ENCODE measurements at regions of chr17 and their contacts with region 1.

Region 1: GRCh38 chr17:27601069-27601975 is 29.7 kb upstream of the LGALS9 start:
- DNase-seq: peak; percentile 16
- H3K4me3 ChIP-seq: no peak overlapping the region
- H3K27me3 ChIP-seq: no peaks in the 10 kb centered on the region
- CTCF ChIP-seq: peak; percentile 91

Region 2: DNA sequence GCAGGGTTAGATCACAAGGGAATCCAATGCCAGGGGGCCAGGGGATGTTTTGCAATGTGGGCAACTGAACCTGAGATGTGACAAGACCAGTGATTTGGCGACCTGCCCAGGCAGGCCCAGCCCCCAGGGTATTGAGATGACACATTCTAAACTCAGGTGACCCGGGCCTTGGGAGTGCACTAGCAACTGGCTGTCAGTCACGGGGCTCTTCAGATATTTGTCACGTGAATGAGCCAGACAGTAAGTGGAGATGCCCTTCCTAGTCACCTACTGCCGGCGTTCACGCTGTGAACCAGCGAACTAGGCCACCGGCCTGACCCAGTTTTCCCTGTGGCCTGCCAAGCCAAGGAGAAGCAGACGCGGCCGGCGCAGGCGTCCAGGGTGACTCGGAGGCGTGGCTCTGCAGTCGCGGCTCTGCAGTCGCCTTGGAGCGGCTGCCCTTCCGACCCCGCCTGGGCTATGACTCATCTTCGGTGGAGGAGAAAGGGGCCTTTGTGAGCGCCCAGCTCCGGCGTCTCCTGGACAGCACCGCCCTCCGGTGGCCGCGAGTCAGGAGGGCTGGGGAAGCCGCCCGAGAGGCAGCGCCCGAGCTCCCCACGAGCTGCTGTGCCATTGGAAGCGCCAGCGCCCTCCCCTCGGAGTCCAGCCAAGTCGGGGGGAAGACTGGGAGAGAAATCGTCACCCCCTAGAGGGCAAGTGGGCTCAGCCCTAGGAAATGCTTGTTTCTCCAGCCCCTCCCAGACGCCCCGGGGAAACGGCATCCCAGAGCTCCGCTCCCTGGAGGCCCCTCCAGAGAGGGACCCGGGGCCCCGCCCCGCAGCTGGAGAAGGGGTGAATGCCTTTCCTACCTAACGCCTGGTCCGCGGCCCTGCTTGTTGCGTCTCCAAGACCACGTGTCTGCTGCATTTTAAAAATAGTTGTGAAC is 268.6 kb before region 1 on chr17:
- CTCF ChIA-PET with region 1: interaction called, 13 read pairs
- POLR2A ChIA-PET with region 1: interaction called, 14 read pairs
- DNase-seq: peak; percentile 86
- H3K4me3 ChIP-seq: peak overlapping the region; percentile 47
- H3K27me3 ChIP-seq: no peaks in the 10 kb centered on the region
- CTCF ChIP-seq: peak; percentile 88

Region 3: DNA sequence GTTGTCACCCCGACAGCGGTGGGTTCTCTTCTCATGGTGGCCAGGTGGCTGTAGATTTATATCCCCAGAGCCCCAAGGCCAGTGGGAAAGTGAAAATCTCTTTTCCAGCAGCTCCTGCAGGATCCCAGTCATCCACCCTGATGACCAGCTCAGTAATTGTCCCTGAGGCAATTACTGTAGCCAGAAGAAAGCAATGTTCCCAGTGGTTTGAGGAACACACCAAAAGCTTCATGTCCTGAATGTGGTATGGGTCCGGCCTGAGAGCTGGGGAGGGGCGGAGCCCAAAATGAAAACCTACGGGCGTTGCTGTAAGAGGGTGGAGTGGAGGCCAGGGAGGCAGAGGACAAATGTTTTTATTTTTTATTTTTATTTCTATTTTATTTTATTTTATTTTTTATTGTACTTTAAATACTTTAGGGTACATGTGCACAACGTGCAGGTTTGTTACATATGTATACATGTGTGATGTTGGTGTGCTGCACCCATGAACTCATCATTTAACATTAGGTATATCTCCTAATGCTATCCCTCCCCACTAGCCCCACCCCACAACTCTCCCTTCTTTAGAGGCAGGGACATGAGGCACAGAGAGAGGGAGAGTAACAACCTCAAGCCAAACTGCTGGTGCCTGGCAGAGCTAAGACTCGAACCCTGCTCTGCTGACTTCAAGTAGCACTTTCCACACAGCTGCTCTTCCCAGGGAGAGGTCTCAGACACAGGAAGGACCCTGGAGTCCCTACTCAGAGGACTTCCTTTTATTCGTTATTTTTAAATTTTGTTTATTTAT is 238.2 kb before region 1 on chr17:
- CTCF ChIA-PET with region 1: interaction called, 231 read pairs
- POLR2A ChIA-PET with region 1: no interaction called
- DNase-seq: no peak
- H3K4me3 ChIP-seq: no peak overlapping the region
- H3K27me3 ChIP-seq: no peaks in the 10 kb centered on the region
- CTCF ChIP-seq: no peak

Region 4: DNA sequence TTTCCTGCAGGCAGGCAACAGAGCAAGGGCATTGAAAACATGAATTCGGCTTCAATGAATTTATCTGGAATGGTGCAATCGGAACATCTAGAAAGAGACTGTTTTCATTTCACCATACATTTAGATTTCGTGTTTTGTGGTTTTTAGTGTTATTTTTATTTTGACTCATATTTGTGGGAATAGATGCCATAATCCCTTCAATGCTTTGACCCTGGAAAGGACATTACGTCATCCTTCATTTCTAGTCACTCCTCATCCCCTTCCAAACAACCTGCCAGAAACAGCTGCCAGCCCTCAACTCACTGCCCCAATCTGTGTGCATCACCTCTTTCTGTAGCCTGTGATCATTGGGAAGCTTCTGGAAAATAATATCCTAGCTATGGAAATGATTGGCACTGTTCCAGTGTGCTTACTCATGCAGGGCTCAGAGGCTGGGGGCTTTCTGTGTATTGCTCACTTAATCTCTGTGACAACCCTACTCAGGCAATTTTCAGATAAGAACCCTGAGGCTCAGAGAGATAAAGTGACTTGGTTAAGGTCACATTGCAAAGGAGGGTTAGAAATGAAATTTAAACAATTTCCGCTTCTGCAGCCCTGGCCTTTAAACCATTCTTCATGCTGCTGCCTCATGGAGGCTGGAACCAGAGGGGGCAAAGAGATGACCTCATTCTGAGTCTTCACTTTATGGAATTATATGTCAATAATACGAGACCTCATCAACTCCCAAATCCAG is 154.6 kb before region 1 on chr17:
- CTCF ChIA-PET with region 1: interaction called, 13 read pairs
- POLR2A ChIA-PET with region 1: no interaction called
- DNase-seq: peak; percentile 30
- H3K4me3 ChIP-seq: no peak overlapping the region
- H3K27me3 ChIP-seq: peaks cover 9% of the 10 kb centered on the region
- CTCF ChIP-seq: no peak

Region 5: DNA sequence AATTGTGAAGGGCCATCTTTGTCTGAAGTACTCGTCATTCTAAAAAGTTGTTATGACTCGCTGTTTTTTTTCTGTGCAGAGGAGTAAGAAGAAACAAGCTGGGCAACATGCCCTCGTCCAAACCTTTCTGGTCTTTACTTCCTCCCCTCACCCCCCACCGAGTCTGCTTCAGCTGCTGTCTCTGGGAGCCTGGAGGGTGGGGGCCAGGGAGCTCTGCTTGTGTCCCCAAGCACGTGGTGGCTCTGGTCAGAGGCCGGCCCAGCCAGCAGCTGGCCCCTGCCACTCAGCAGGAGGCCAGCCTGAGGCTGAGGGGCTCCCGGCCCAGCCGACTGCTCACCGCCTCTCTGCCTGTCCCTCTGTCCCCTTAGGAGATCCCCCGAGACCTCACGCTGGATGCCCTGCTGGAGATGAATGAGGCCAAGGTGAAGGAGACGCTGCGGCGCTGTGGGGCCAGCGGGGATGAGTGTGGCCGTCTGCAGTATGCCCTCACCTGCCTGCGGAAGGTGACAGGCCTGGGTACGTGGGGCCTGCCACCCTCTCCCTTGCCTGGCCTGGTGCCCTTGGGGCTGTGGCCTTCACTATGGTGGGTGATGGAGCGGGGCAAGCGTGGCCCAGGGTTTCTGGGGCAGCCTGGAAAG is 24.1 kb before region 1 on chr17:
- CTCF ChIA-PET with region 1: interaction called, 10 read pairs
- POLR2A ChIA-PET with region 1: no interaction called
- DNase-seq: peak; percentile 26
- H3K4me3 ChIP-seq: no peak overlapping the region
- H3K27me3 ChIP-seq: no peaks in the 10 kb centered on the region
- CTCF ChIP-seq: no peak

Region 6: DNA sequence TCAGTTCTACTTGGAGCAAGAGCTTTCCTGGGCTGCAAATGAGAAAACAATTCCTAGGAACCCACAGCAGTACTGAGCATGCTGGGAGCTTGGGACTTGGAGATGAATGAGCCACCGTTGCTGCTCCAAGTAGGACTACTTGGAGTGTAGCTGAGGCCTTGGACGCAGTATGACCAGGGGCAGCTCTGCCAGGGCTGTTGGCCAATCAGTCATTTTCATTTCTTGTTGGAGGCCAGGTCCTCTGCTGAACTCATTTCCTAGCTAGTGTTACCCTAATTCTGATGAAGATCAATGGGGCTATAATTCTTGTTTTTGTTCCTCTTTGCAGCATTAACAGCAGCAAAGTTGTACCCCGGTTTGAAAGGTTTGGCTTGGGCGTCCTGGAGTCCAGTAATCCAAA is 21.7 kb after region 1 on chr17:
- CTCF ChIA-PET with region 1: interaction called, 11 read pairs
- POLR2A ChIA-PET with region 1: no interaction called
- DNase-seq: no peak
- H3K4me3 ChIP-seq: no peak overlapping the region
- H3K27me3 ChIP-seq: no peaks in the 10 kb centered on the region
- CTCF ChIP-seq: no peak

Region 7: DNA sequence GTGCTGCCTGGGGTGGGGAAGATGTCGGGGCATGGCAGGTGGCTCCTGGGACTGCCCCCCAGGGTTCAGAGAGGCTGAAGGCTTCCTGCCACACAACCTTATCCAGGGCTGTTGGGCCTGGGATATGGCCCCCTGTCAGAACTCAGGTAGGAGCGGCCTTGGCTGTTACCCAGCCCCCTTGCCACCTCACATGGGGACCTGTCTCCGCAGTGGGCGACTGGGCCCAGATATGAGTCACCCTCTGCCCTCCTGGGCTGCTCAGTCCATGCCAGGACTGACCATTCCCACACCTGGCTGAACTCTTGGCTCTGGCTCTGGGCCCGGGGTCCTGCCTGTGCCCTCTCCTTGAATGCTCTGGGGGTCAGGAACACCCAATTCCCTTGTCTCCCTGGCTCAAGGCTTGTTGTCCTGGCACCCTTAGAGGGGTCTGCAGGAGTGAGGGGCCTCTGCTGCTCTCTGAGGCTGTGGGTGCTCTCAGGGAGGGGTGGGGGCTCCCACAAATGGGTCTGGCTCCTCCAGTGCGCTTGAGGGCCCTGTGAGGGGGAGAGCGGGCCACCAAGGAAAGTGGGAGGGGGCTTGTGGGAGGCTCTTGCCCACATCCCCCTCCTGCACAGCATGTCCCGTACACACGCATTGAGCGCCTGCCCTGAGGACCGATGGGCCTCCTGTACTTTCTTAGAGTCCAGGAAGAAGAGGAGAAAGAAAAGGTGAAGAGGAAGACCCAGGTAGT is 65.7 kb after region 1 on chr17:
- CTCF ChIA-PET with region 1: no interaction called
- POLR2A ChIA-PET with region 1: no interaction called
- DNase-seq: no peak
- H3K4me3 ChIP-seq: no peak overlapping the region
- H3K27me3 ChIP-seq: no peaks in the 10 kb centered on the region
- CTCF ChIP-seq: no peak